GM10248 (cell line): ENCODE measurements at regions of chr3 and their contacts with region 1.

Region 1: GRCh38 chr3:98602078-98602678 is 8.8 kb upstream of the CPOX start:
- DNase-seq: peak; percentile 53
- CTCF ChIP-seq: peak; percentile 81

Region 2: DNA sequence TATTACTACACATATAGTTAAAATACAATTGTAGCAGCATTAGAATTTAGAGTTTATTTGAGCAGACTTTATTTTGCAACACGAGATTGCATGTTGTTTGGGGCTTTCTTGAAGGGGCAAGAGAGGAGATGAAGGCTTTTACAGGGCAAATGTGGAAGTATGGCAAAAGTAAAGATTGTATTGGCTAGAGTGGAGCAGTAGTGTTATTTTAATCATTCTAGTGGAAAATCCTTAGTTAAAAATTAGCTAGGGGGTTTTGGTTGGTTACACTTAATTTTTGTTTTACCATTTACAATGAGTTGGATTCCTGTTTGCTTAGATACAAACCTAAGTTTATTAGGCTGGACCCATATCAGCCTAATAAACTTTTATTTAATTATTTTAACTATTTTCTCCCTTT is 431.1 kb before region 1 on chr3:
- CTCF ChIA-PET with region 1: no interaction called
- POLR2A ChIA-PET with region 1: no interaction called
- DNase-seq: no peak
- CTCF ChIP-seq: no peak

Region 3: GRCh38 chr3:98573181-98573728 is 28.9 kb before region 1 on chr3:
- CTCF ChIA-PET with region 1: interaction called, 10 read pairs
- POLR2A ChIA-PET with region 1: no interaction called
- DNase-seq: peak; percentile 41
- CTCF ChIP-seq: peak; percentile 47

Region 4: GRCh38 chr3:98612587-98612986 is 10.4 kb after region 1 on chr3:
- CTCF ChIA-PET with region 1: interaction called, 66 read pairs
- POLR2A ChIA-PET with region 1: no interaction called
- DNase-seq: no peak
- CTCF ChIP-seq: no peak

Region 5: GRCh38 chr3:98657457-98657856 is 55.3 kb after region 1 on chr3:
- CTCF ChIA-PET with region 1: interaction called, 20 read pairs
- POLR2A ChIA-PET with region 1: no interaction called
- DNase-seq: peak; percentile 71
- CTCF ChIP-seq: peak; percentile 61

Region 6: DNA sequence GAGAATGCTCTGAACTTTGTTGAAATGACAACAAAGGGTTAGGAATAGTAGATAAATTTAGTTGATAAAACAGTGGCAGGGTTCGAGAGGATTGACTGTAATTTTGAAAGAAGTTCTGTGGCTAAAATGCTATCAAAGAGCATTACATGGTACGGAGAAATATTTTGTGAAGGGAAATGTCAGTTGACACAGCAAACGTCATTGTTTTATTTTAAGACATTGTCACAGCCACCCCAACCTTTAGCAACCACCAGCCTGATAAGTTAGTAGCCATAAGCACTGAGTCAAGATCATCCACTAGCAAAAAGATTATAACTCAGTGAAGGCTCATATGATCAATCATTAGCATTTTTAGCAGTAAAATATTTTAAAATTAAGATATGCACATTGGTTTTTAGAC is 152.3 kb after region 1 on chr3:
- CTCF ChIA-PET with region 1: interaction called, 10 read pairs
- POLR2A ChIA-PET with region 1: no interaction called
- DNase-seq: no peak
- CTCF ChIP-seq: no peak

Region 7: GRCh38 chr3:98784666-98785600 is 182.8 kb after region 1 on chr3:
- CTCF ChIA-PET with region 1: interaction called, 35 read pairs
- POLR2A ChIA-PET with region 1: no interaction called
- DNase-seq: no peak
- CTCF ChIP-seq: no peak

Region 8: GRCh38 chr3:98856724-98857123 is 254.5 kb after region 1 on chr3:
- CTCF ChIA-PET with region 1: no interaction called
- POLR2A ChIA-PET with region 1: no interaction called
- DNase-seq: no peak
- CTCF ChIP-seq: no peak